ENCODE measurements at regions of chr2 and their contacts with region 1.

Region 1: DNA sequence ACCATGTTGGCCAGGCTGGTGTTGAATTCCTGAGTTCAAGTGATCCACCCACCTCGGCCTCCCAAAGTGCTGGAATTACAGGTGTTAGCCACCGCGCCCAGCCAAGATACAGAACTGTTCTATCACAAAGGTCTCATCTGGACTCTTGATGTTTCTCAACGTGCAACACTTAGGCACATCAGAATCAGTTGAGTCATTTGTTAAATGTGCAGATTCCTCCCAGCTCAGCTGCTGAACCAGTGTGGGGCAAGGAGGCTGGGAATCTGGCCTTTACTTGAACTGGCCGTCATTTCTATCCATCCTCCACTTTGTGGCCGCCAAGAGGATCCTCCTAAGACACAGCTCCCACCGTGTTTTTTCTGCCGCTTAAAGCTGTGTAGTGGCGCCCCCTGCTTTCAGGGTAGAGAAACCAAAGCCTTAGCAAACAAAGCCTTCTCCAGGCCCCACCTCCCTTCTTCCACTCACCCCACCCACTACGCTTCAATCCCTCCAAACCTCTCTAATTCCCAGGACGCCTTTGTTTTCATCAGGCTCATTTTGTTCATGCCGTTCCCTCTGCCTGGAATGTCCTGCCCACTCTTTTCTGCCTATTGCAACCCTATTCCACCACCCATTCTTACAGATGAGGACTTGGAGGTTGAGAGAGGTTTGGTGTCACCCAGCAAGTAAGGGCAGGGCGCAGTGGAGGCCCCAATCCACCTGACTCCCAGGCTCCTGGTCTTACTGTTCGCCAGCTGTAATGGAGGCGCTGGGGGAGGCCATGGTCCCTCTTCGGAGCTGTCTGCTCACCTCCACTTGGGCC is 776 bp upstream of the SPEG start:
- DNase-seq: peak; percentile 70 to 85 (median 74)
- ATAC-seq: peak; percentile 96
- H3K4me3 ChIP-seq: no peak overlapping the region
- H3K27ac ChIP-seq: no peak overlapping the region
- H3K4me1 ChIP-seq: peaks cover 8 to 23% of the 10 kb centered on the region in 2 experiments; a peak in 4 of 5 replicates
- H3K27me3 ChIP-seq: no peaks in the 10 kb centered on the region
- CTCF ChIP-seq: peak; percentile 81 to 87 (median 83)
- EP300 ChIP-seq: no peak
- POLR2A ChIP-seq: no peak
- RAD21 ChIP-seq: peak; percentile 59 to 85

Region 2: GRCh38 chr2:219402665-219403515 is 31.0 kb before region 1 on chr2:
- CTCF ChIA-PET with region 1: interaction called, 21 read pairs
- POLR2A ChIA-PET with region 1: no interaction called
- in situ Hi-C with region 1: loop called (anchors 5 kb)
- intact Hi-C with region 1: loop called (anchors 1 kb)
- DNase-seq: peak; percentile 68 to 81 (median 72)
- ATAC-seq: peak; percentile 83
- H3K4me3 ChIP-seq: no peak overlapping the region
- H3K27ac ChIP-seq: no peak overlapping the region
- H3K4me1 ChIP-seq: peaks cover 17 to 18% of the 10 kb centered on the region in 2 experiments
- H3K27me3 ChIP-seq: no peaks in the 10 kb centered on the region
- CTCF ChIP-seq: peak; percentile 85 to 90 (median 89)
- EP300 ChIP-seq: no peak
- POLR2A ChIP-seq: no peak
- RAD21 ChIP-seq: peak; percentile 78 to 87

Measured in K562 (cell line).